ENCODE measurements at regions of chr15 and their contacts with region 1.

Region 1: GRCh38 chr15:90539789-90540188 is 10.1 kb downstream of the CRTC3 start:
- DNase-seq: peak in 2 of 5 donors; percentile 32 to 66
- H3K4me3 ChIP-seq: peak overlapping the region; percentile 11
- H3K4me3 Mint-ChIP-seq: peak overlapping the region; percentile 86 to 94 (median 90)
- H3K27ac ChIP-seq: no peak overlapping the region
- H3K27ac Mint-ChIP-seq: peak overlapping the region; percentile 90 to 99 (median 96)
- H3K4me1 ChIP-seq: peaks cover 64% of the 10 kb centered on the region
- H3K4me1 Mint-ChIP-seq: peaks cover 55 to 84% (median 79%) of the 10 kb centered on the region in 3 donors
- H3K27me3 ChIP-seq: no peaks in the 10 kb centered on the region
- H3K27me3 Mint-ChIP-seq: no peaks in the 10 kb centered on the region

Region 2: DNA sequence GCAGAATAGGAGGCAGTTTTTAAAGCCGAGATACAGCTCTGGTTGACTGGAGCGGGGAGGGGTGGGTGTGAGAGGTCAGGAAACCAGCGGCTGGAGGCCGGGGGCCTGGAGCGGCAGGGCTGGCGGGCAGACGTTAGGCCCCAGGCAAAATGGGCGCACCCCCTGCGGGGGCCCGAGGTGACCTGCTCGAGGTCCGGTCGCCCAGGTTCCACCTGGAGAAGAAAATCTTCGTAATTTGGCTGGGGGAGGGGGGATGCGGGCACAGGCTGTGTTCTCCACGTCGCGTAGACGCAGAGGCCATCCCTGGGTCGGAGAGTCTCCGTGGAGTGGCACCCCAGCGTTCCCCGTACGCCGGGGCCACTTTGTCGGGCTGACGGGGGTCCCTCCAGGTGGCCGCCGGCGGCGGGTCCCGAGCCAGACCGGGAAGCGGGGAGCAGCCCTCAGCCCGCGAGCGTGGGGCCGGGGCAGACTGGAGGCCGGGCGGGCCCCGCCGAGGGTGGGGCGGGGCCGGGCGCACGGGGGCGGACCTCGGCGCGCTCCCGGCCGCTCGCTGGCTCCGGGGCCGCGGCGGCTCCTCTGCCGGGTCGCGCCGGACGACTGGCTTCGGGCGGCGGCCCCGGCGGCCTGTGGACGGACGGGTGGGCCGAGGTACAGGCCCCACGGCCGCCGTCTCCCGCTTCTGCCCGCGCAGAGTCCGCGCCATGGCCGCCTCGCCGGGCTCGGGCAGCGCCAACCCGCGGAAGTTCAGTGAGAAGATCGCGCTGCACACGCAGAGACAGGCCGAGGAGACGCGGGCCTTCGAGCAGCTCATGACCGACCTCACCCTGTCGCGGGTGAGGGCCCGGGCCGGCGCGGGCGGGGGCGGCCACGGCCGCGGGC is 10.2 kb before region 1 on chr15 and contains the start of gene CRTC3:
- CTCF ChIA-PET with region 1: interaction called, 8 read pairs
- POLR2A ChIA-PET with region 1: interaction called, 15 read pairs
- DNase-seq: peak; percentile 38 to 67 (median 52)
- H3K4me3 ChIP-seq: peak within 1 kb of the TSS; percentile 80
- H3K4me3 Mint-ChIP-seq: peak within 1 kb of the TSS; percentile 86 to 97 (median 92)
- H3K27ac ChIP-seq: peak within 1 kb of the TSS; percentile 61
- H3K27ac Mint-ChIP-seq: peak within 1 kb of the TSS; percentile 62 to 97 (median 87)
- H3K4me1 ChIP-seq: peaks cover 35% of the 10 kb centered on the region
- H3K4me1 Mint-ChIP-seq: peaks cover 36 to 49% (median 44%) of the 10 kb centered on the region in 3 donors
- H3K27me3 ChIP-seq: no peaks in the 10 kb centered on the region
- H3K27me3 Mint-ChIP-seq: no peaks in the 10 kb centered on the region
- total RNA-seq, gene CRTC3: 25.5 to 26.7 TPM